ENCODE measurements at regions of chr13 and their contacts with region 1.

Region 1: GRCh38 chr13:99916366-99917103 is 55.0 kb downstream of the ZIC5 start:
- DNase-seq: no peak
- H3K4me3 ChIP-seq: no peak overlapping the region
- H3K27ac ChIP-seq: no peak overlapping the region
- H3K4me1 ChIP-seq: no peaks in the 10 kb centered on the region
- H3K27me3 ChIP-seq: no peaks in the 10 kb centered on the region
- CTCF ChIP-seq: peak; percentile 51 to 73 (median 62)
- POLR2A ChIP-seq: no peak

Region 2: GRCh38 chr13:100514788-100515409 is 598.4 kb after region 1 on chr13:
- intact Hi-C with region 1: loop called (anchors 10 kb)
- DNase-seq: peak in 1 of 2 donors; percentile 52
- H3K4me3 ChIP-seq: no peak overlapping the region
- H3K27ac ChIP-seq: no peak overlapping the region
- H3K4me1 ChIP-seq: peaks cover 12% of the 10 kb centered on the region
- H3K27me3 ChIP-seq: no peaks in the 10 kb centered on the region
- CTCF ChIP-seq: peak; percentile 72 to 93 (median 84)
- POLR2A ChIP-seq: no peak

Region 3: DNA sequence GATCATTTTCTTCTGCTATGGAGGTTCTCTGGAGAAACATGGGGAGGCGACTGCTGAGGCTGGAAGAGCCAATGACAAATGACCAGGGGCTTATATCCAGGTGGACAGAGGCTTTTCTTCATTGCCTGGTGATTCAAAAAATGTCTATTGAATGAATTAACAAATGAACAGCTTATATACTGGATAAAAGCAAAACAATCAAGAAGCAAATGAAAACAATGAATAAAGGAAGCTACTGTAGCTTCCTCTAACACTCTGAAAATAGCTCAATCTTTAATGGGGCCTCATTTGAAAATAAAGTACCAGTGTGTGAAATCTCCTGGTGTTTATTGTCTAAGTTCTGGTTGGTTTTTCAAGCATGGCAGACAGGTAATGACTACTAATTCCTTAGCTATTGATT is 925.6 kb after region 1 on chr13:
- intact Hi-C with region 1: no loop called
- DNase-seq: no peak
- H3K4me3 ChIP-seq: no peak overlapping the region
- H3K27ac ChIP-seq: no peak overlapping the region
- H3K4me1 ChIP-seq: no peaks in the 10 kb centered on the region
- H3K27me3 ChIP-seq: no peaks in the 10 kb centered on the region
- CTCF ChIP-seq: no peak
- POLR2A ChIP-seq: no peak

Region 4: GRCh38 chr13:101773062-101773461 is 1856.5 kb after region 1 on chr13:
- intact Hi-C with region 1: no loop called
- DNase-seq: no peak
- H3K4me3 ChIP-seq: no peak overlapping the region
- H3K27ac ChIP-seq: no peak overlapping the region
- H3K4me1 ChIP-seq: no peaks in the 10 kb centered on the region
- H3K27me3 ChIP-seq: no peaks in the 10 kb centered on the region
- CTCF ChIP-seq: no peak
- POLR2A ChIP-seq: no peak